Common myeloid progenitor, CD34-positive (primary cell): ENCODE measurements at regions of chr5 and their contacts with region 1.

Region 1: DNA sequence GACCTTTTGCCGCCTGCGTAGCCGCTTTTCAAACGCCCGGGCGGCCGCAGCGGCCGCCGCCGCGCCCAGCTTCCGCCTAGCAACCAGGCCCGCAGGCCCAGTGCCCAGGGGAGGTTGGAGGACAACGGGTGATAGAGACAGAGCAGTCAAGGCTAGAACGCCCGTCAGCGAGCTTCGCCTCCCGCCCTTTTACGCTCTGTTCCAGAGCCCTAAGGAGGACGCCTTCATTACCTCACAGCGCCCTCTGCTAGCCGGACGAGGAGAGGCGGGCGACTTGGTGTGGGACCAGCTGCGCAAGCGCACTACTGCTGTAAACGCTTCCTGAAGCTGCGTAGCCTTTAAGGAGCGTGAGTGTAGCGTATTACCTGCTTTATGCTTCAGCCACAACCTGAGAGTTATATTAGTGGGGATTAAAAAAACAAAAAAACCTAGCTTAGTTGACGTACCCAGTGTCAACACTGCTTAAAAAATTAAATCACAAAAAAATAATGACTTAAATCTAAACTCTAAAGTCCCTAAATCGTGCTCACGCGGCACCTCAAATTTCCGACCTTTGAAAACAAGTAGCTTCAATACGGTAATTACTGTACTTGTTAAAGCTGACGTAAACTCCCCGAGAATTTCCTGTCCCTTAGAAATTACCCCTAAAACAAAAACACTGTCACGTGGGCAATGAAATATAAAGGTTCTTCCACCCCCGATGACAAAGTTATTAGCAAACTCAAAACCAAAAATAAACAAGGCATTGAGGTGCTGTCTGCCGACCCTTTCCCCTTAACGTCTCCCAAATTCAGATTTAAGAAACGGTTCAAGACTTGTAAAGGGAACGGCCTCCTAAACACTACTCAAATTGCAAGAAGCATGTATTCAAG is at the start of gene CEP120:
- DNase-seq: peak; percentile 99 to 100 (median 100)
- H3K4me3 ChIP-seq: peak within 1 kb of the TSS; percentile 79 to 99 (median 89)
- H3K27ac ChIP-seq: peak within 1 kb of the TSS; percentile 85 to 95
- H3K4me1 ChIP-seq: peaks cover 10 to 17% (median 17%) of the 10 kb centered on the region in 4 experiments
- H3K27me3 ChIP-seq: no peaks in the 10 kb centered on the region

Region 2: DNA sequence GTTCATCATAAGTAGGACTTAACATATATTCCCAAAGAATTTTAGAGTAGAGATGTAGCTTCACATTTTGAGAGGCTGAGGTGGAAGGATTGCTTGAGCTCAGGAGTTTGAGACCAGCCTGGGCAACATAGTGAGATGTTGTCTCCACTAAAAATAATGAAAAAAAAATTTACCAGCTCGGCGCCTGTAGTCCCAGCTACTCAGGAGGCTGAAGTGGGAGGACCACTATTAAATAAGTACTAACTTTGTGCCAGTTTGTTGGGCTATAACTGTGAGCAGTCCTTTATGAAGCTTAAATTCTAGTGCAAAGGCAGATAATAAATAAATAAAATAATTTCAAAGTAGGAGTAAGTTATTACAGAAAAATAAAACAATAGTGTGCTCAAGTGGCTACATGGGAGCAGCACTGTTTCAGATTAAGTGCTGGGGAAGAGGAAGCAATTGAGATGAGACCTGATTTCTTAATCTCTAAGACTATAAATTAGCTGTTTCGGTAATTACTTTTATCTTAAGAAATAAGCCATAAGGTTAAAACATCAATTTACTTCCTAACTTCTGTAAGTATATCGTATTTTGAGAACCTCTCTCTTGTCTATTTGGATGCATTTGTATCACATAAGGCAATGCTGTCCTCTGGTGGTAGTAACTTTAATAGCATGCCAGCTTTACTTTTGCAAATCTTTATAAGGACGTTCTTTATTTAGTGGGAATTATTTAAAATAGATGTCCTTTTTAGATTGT is 187.3 kb after region 1 on chr5:
- CTCF ChIA-PET with region 1: interaction called, 15 read pairs
- POLR2A ChIA-PET with region 1: no interaction called
- DNase-seq: peak; percentile 64 to 84 (median 80)
- H3K4me3 ChIP-seq: no peak overlapping the region
- H3K27ac ChIP-seq: no peak overlapping the region
- H3K4me1 ChIP-seq: no peaks in the 10 kb centered on the region
- H3K27me3 ChIP-seq: no peaks in the 10 kb centered on the region

Region 3: GRCh38 chr5:125394661-125395280 is 1971.3 kb after region 1 on chr5:
- CTCF ChIA-PET with region 1: no interaction called
- POLR2A ChIA-PET with region 1: interaction called, 10 read pairs
- DNase-seq: no peak
- H3K4me3 ChIP-seq: no peak overlapping the region
- H3K27ac ChIP-seq: no peak overlapping the region
- H3K4me1 ChIP-seq: no peaks in the 10 kb centered on the region
- H3K27me3 ChIP-seq: no peaks in the 10 kb centered on the region